ENCODE measurements at regions of chr7 and their contacts with region 1.

Region 1: GRCh38 chr7:99525713-99526440 is 21.4 kb downstream of the ZKSCAN5 start:
- DNase-seq: peak in 11 of 14 experiments; percentile 3 to 46 (median 22)
- ATAC-seq: no peak
- H3K4me3 ChIP-seq: no peak overlapping the region
- H3K4me3 Mint-ChIP-seq: no peak overlapping the region
- H3K27ac ChIP-seq: no peak overlapping the region
- H3K27ac Mint-ChIP-seq: no peak overlapping the region
- H3K4me1 ChIP-seq: peaks cover 4% of the 10 kb centered on the region
- H3K4me1 Mint-ChIP-seq: no peaks in the 10 kb centered on the region
- H3K27me3 ChIP-seq: no peaks in the 10 kb centered on the region
- H3K27me3 Mint-ChIP-seq: no peaks in the 10 kb centered on the region
- CTCF ChIP-seq: no peak

Region 2: GRCh38 chr7:99362801-99363200 is 163.1 kb before region 1 on chr7:
- CTCF ChIA-PET with region 1: no interaction called
- POLR2A ChIA-PET with region 1: no interaction called
- intact Hi-C with region 1: no loop called
- DNase-seq: no peak
- ATAC-seq: no peak
- H3K4me3 ChIP-seq: no peak overlapping the region
- H3K4me3 Mint-ChIP-seq: no peak overlapping the region
- H3K27ac ChIP-seq: no peak overlapping the region
- H3K27ac Mint-ChIP-seq: no peak overlapping the region
- H3K4me1 ChIP-seq: peaks cover 7% of the 10 kb centered on the region
- H3K4me1 Mint-ChIP-seq: no peaks in the 10 kb centered on the region
- H3K27me3 ChIP-seq: no peaks in the 10 kb centered on the region
- H3K27me3 Mint-ChIP-seq: no peaks in the 10 kb centered on the region
- CTCF ChIP-seq: no peak

Region 3: DNA sequence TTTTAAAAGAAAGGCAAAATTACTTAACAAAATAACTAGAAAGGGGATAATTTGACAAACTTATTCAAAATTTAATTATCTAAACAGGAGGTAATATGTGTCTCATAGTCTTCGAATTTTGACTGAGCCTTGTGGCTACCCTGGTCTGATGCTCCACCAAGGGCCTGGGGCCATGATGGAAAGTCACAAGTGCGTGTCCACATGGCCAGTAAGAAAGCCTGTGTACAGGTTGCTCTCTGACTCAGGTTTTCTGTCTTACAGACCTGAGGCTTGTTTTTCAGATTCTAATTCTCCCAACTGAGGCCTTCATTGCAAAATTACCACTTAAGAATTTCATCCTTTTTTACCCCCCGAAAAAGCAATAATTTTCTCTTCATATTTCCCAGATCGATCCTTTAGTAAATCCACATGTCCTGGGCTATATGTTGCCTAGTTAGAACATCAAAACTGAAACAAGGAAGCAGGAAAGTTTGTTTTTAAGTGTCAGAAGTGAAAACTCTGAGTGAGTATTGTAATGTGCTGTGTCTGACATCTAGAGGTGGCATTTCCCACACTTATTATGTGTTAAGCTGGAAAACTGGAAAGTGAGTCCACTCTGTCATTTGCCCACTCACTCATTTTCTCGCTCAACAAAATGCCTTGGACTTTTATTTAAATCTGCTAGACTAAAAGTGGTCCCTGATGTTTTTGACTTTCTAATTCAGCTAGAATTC is 311.9 kb after region 1 on chr7:
- CTCF ChIA-PET with region 1: no interaction called
- POLR2A ChIA-PET with region 1: no interaction called
- intact Hi-C with region 1: loop called in 1 of 2 experiments (anchors 5 kb)
- DNase-seq: peak in 1 of 14 experiments; percentile 12
- ATAC-seq: no peak
- H3K4me3 ChIP-seq: no peak overlapping the region
- H3K4me3 Mint-ChIP-seq: no peak overlapping the region
- H3K27ac ChIP-seq: no peak overlapping the region
- H3K27ac Mint-ChIP-seq: no peak overlapping the region
- H3K4me1 ChIP-seq: no peaks in the 10 kb centered on the region
- H3K4me1 Mint-ChIP-seq: peaks cover 8% of the 10 kb centered on the region
- H3K27me3 ChIP-seq: no peaks in the 10 kb centered on the region
- H3K27me3 Mint-ChIP-seq: peaks cover 3% of the 10 kb centered on the region
- CTCF ChIP-seq: no peak

Region 4: DNA sequence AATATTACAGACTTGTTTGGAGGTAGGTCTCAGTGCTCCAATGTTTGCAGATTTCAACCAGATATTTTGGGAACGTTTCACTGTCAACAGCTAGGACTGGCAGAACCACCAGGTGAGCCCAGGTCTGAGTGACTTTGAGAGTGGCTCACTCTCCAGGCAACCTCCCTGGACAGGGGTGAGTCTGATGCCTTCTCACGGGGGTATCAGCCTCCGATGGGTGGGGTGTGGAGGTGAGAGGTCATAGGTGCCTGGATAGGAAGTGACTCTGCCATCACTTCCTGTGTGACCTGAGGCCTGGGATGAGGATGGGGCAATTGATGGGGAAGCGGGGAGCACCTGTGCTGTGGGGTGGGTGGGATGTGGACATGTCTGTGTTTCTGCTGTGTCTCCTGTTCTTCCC is 445.4 kb after region 1 on chr7:
- CTCF ChIA-PET with region 1: no interaction called
- POLR2A ChIA-PET with region 1: no interaction called
- intact Hi-C with region 1: no loop called
- DNase-seq: no peak
- ATAC-seq: no peak
- H3K4me3 ChIP-seq: no peak overlapping the region
- H3K4me3 Mint-ChIP-seq: no peak overlapping the region
- H3K27ac ChIP-seq: no peak overlapping the region
- H3K27ac Mint-ChIP-seq: no peak overlapping the region
- H3K4me1 ChIP-seq: no peaks in the 10 kb centered on the region
- H3K4me1 Mint-ChIP-seq: no peaks in the 10 kb centered on the region
- H3K27me3 ChIP-seq: peaks cover 7 to 8% of the 10 kb centered on the region in 2 experiments
- H3K27me3 Mint-ChIP-seq: peaks cover 41% of the 10 kb centered on the region
- CTCF ChIP-seq: no peak